ENCODE measurements at regions of chr11 and their contacts with region 1.

Region 1: GRCh38 chr11:65888163-65888814 is at the start of gene FIBP:
- DNase-seq: peak; percentile 99
- H3K4me3 ChIP-seq: peak within 1 kb of the TSS; percentile 71 to 84 (median 78)
- H3K27ac ChIP-seq: peak within 1 kb of the TSS; percentile 96 to 100 (median 98)
- H3K4me1 ChIP-seq: peaks cover 43 to 83% (median 70%) of the 10 kb centered on the region in 4 donors
- H3K27me3 ChIP-seq: no peaks in the 10 kb centered on the region
- CTCF ChIP-seq: peak; percentile 62 to 87 (median 86)
- EP300 ChIP-seq: no peak
- POLR2A ChIP-seq: peak; percentile 85
- total RNA-seq, gene FIBP: 33.2 to 74.3 (median 48.6) TPM

Region 2: DNA sequence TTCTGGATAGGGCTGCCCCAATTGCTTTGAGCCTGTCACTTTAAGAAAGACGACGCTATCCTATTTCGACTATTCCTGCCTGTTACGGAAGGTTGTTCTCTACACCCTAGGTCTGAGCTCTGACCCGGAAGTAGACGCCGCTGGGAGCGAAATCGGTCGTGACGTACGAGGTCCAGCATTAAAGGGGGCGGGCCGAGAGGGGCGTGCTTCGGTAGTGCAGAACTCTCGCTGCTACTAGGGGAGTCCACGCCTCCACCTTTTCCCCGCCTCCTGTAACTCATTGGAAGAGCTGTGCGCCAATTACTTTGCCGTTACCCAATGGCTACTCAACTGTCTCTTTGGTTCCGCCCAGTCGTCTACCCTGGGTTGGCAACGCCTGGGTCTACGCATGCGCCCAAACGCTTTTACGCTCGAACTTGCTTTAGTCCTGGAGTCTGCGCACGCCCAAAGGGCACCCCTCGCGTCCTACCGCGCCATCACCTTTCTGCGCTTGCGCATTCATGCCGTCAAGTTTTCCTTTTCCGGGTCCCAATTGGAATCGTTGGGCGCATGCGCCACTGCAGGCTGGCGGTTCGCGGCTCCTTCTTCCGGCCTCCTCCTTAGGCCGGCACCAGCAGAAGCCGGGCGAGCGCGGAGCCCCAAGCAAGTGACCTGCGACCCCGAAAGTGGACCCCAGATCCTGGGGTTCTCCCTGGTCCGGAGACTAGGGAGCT is 272.9 kb before region 1 on chr11 and contains the start of gene PCNX3:
- intact Hi-C with region 1: no loop called
- DNase-seq: peak; percentile 100
- H3K4me3 ChIP-seq: peak within 1 kb of the TSS; percentile 72 to 96 (median 82)
- H3K27ac ChIP-seq: peak within 1 kb of the TSS; percentile 87 to 97 (median 96)
- H3K4me1 ChIP-seq: peaks cover 40 to 60% (median 55%) of the 10 kb centered on the region in 4 donors
- H3K27me3 ChIP-seq: no peaks in the 10 kb centered on the region
- CTCF ChIP-seq: peak in 1 of 3 experiments; percentile 35
- EP300 ChIP-seq: no peak
- POLR2A ChIP-seq: peak; percentile 19
- total RNA-seq, gene PCNX3: 21.4 to 43.1 (median 27.1) TPM

Region 3: GRCh38 chr11:65844231-65845190 is 43.8 kb before region 1 on chr11:
- intact Hi-C with region 1: no loop called
- DNase-seq: no peak
- H3K4me3 ChIP-seq: no peak overlapping the region
- H3K27ac ChIP-seq: no peak overlapping the region
- H3K4me1 ChIP-seq: no peaks in the 10 kb centered on the region
- H3K27me3 ChIP-seq: no peaks in the 10 kb centered on the region
- CTCF ChIP-seq: no peak
- EP300 ChIP-seq: no peak
- POLR2A ChIP-seq: no peak

Region 4: DNA sequence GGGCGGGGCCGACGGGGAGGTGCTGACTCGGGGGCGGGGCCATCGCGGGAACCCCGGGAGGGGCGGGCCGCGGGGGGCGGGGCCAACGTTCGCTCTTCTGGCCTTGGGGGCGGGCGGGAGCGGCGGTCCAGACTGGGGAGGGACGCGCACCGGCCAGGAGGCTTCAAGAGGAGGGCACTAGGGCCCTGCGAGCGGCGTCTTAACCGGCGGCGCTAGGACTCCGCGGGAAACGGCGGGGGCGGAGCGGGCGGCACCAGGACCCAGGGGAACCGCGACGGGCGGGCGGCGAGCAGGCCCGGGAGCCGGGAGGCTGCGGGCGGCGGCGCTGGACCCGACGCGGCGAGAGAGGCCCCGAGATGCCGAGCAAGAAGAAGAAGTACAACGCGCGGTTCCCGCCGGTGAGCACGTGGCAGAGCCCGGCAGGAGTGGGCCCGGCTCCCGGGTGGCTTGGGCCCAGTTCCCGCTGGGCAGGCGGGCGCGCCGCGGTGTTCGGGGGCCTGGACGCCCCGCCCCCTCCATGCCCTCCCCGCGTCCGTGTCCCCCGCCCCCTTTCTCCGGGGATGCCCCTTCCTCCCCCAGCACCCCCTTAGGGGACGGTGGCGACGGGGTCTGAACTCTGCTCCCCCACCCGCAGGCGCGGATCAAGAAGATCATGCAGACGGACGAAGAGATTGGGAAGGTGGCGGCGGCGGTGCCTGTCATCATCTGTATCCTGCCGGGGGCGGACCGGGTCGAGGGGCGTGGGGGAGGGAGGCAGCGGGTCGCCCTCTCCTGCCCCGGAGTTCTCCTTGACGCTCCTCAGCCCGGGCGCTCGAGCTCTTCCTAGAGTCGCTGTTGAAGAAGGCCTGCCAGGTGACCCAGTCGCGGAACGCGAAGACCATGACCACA is 31.1 kb after region 1 on chr11 and contains the start of gene DRAP1:
- intact Hi-C with region 1: loop called (anchors 1 kb)
- DNase-seq: peak; percentile 99
- H3K4me3 ChIP-seq: peak within 1 kb of the TSS; percentile 68 to 99 (median 88)
- H3K27ac ChIP-seq: peak within 1 kb of the TSS; percentile 91 to 99 (median 96)
- H3K4me1 ChIP-seq: peaks cover 49 to 61% (median 58%) of the 10 kb centered on the region in 4 donors
- H3K27me3 ChIP-seq: no peaks in the 10 kb centered on the region
- CTCF ChIP-seq: peak in 1 of 3 experiments; percentile 36
- EP300 ChIP-seq: no peak
- POLR2A ChIP-seq: peak; percentile 60
- total RNA-seq, gene DRAP1: 78.4 to 122 (median 101) TPM

Region 5: DNA sequence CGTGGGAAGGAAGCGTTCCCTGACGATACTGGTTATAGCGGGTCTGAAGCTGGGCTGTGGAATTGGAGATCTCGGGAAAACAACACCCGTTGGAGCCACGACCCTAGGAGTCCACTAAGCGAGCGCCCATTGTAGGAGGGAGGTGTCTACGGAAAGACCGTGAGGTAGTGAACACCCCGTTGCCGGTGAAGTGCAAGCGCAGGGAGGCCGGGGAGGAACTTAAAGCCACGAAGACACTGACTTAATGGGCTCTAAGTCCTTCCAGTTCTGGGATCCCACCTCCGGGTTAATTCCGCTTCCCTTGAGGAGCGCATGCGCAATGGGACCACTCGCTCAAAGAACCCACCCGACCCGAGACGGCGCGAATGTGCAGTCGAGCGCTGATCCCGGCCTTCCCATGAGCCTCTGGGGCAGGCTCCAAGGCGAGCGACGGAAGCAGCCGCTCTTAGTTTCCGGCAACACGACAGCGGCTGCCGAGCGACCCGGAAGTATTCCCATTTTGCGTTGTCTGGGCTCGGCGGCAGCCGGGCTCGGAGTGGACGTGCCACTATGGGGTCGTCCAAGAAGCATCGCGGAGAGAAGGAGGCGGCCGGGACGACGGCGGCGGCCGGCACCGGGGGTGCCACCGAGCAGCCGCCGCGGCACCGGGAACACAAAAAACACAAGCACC is 73.1 kb after region 1 on chr11 and contains the start of gene SART1:
- intact Hi-C with region 1: loop called (anchors 1 kb)
- DNase-seq: peak; percentile 99
- H3K4me3 ChIP-seq: peak within 1 kb of the TSS; percentile 92 to 99 (median 96)
- H3K27ac ChIP-seq: peak within 1 kb of the TSS; percentile 84 to 92 (median 91)
- H3K4me1 ChIP-seq: peaks cover 23 to 34% (median 32%) of the 10 kb centered on the region in 4 donors
- H3K27me3 ChIP-seq: peaks cover 0 to 14% (median 0%) of the 10 kb centered on the region in 4 donors
- CTCF ChIP-seq: peak in 1 of 3 experiments; percentile 43
- EP300 ChIP-seq: no peak
- POLR2A ChIP-seq: peak; percentile 18
- total RNA-seq, gene SART1: 47.8 to 65.0 (median 58.7) TPM

Region 6: DNA sequence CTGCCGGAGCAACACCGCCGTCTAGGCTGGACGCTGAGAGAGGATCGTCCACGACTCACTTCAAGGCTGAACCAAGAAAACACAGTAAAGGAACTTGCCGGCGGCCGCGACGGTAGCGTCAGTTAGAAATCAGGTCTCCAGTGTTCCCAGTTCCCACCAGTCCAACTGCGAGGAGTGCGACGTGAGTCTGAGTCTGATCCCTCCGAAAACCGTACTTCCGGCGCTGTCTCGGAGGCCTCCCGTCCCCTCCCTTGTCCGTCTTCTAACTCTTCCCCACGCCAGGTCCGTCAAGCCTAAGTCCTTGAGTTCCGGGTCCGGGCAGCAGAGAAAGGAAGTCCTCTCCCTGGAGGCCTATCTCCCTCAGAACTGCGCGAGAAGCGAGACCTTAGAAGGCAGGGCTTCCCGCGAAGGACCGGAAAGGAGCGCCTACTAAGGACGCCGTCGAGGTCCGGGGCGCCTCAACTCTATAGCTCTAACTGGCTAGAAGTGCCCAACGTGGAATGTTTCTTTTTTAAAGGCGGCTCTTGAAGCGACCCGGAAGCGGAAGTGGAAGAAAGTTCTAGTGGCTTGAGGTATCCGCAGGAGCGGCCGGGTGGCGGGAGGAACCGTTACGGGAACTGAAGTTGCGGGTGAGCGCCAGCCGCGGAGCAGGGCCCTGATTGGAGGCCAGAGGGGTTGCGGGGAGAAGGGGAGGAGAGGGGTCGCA is 113.8 kb after region 1 on chr11 and contains the starts of genes BANF1 and EIF1AD:
- intact Hi-C with region 1: loop called (anchors 5 kb)
- DNase-seq: peak; percentile 97
- H3K4me3 ChIP-seq: peak within 1 kb of the TSS; percentile 69 to 93 (median 85)
- H3K27ac ChIP-seq: peak within 1 kb of the TSS; percentile 86 to 95 (median 94)
- H3K4me1 ChIP-seq: peaks cover 20 to 38% (median 29%) of the 10 kb centered on the region in 4 donors
- H3K27me3 ChIP-seq: no peaks in the 10 kb centered on the region
- CTCF ChIP-seq: peak in 1 of 3 experiments; percentile 6
- EP300 ChIP-seq: no peak
- POLR2A ChIP-seq: no peak
- total RNA-seq, gene BANF1: 46.9 to 72.5 (median 57.9) TPM
- total RNA-seq, gene EIF1AD: 25.3 to 34.9 (median 28.2) TPM